Mucosa of descending colon (tissue), 3 donors: ENCODE measurements at regions of chr9 and their contacts with region 1.

Region 1: GRCh38 chr9:87662808-87663528 is 63.0 kb upstream of the CTSL start:
- DNase-seq: peak; percentile 73 to 89 (median 89)
- ATAC-seq: peak; percentile 93
- H3K4me3 ChIP-seq: no peak overlapping the region
- H3K4me1 ChIP-seq: no peaks in the 10 kb centered on the region
- CTCF ChIP-seq: peak; percentile 58

Region 2: DNA sequence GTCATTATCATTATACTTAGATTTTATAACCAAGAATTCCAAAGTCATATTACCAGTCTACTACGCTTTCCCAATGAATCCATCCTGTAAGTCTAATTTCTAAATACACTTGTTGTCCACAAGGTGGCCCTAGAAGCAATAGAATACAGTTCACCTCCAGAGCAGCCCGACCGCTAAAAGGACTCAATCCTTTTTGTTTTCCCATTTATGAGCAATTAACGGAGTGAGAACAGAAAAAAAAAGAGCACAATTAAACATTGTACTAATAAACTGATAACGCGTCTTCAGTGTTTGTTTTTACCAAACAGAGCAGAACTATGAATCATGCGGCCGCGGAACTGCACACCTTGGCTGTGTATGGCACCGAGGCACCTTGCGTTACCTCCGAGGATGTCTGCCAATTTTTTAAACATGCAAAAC is 326.0 kb before region 1 on chr9:
- intact Hi-C with region 1: loop called (anchors 2 to 5 kb)
- DNase-seq: peak in 1 of 3 donors; percentile 33
- ATAC-seq: peak; percentile 64
- H3K4me3 ChIP-seq: no peak overlapping the region
- H3K4me1 ChIP-seq: no peaks in the 10 kb centered on the region
- CTCF ChIP-seq: peak; percentile 17

Region 3: DNA sequence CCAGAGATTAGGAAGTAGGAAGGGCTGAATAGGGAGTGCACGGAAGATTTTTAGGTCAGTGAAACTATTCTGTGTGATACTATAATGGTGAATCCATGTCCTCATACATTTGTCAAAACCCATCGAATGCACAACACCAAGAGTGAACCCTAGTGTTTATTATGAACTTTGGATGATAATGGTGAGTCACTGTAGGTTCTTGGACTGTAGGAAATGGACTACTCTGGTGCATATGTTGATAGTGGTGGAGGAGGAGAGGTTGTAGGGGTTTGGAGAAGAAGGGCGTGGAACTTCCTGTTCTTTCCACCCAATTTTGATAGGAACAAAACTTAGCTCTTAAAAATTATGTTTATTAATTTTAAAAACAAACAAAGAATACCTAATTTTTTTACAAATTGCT is 77.2 kb after region 1 on chr9:
- intact Hi-C with region 1: no loop called
- DNase-seq: no peak
- ATAC-seq: no peak
- H3K4me3 ChIP-seq: no peak overlapping the region
- H3K4me1 ChIP-seq: no peaks in the 10 kb centered on the region
- CTCF ChIP-seq: no peak

Region 4: DNA sequence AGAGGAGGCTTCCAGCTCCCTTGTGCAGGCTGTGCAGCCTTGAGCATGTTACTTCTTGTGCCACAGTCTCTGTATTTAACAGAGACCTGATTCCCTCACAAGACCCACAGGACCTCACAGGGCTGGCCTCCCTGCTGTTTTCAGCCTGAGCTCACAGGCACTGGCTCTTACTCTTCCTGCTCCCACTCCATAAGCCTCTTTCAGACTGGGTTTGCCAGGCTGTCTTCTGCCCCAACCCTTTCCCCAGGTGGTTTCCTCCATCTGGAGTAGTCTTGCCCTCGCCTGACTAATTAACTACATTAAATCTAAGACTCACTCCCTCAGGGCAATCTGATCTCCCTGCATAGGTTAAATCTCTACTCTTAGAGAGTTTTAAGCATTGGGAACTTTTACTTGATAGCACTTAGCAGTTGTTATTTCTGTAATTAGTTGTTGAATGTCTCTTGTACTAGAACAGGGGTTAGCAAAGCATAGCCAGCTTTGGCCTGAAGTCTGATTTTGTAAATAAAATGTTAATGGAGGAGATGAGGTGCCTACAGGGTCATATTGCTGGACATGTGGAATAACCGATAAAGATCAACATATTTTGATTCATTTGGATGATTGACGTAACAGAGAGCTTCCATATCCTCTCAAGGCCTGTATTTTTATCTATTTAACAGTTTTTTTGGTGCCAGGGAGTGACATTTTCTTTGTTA is 191.1 kb after region 1 on chr9:
- intact Hi-C with region 1: no loop called
- DNase-seq: no peak
- ATAC-seq: no peak
- H3K4me3 ChIP-seq: no peak overlapping the region
- H3K4me1 ChIP-seq: no peaks in the 10 kb centered on the region
- CTCF ChIP-seq: no peak